PC-3 (cell line): ENCODE measurements at regions of chr15 and their contacts with region 1.

Region 1: DNA sequence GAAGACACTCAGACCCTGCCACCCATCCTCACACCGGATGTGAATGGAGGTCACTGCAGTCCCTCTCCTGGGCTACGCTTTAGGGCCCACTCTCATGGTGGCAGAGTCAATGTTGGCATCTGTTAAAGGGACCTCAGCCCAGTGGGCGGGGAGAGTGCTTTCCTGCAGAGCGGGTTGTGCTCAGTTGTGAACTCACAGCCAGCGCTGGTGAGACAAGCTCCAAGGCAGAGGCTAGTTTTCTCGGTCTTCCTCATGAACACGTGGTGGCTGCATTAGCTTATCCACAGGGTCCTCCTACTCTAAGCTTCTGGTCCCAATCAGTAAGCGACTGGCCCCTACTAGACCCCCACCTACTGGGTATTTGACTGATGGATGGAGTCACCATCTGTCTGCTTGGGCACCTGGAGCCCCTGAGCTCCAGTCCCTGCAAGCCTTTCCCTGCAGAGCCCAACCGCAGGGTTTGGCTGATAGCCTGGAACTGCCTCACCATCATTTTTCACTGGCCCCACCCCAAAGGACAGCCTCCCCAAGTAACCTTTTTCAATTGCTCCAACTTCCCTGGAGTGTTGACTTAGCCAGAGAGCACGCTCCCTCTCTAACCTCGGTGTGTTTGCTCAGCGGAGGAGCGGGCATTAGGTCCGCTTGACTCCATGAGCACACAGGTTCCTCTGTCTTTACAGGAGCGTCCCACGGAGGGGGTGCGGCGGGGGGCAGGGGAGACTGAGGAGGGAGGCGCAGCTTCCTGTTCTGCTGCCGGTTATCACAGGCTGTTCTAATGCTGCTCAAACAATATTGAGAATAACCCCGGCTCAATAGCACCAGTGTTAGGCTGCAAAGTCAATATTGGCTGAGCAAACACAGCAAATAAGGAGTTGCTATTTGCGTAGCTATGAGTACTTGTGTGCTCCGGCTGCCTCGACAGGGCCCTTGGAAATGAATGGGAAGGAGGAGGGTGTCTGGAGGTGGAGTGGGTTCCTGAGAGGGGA is 141.7 kb downstream of the RPLP1 start:
- DNase-seq: peak; percentile 98
- ATAC-seq: peak; percentile 79
- H3K4me3 ChIP-seq: peak overlapping the region; percentile 40; the same call in 1 of the 2 replicates
- H3K27ac ChIP-seq: peak overlapping the region; percentile 98
- H3K4me1 ChIP-seq: peaks cover 53% of the 10 kb centered on the region
- H3K27me3 ChIP-seq: no peaks in the 10 kb centered on the region
- CTCF ChIP-seq: no peak

Region 2: GRCh38 chr15:69475769-69476358 is 118.4 kb before region 1 on chr15:
- CTCF ChIA-PET with region 1: no interaction called
- POLR2A ChIA-PET with region 1: no interaction called
- intact Hi-C with region 1: loop called (anchors 5 kb)
- DNase-seq: peak; percentile 80
- ATAC-seq: peak; percentile 84
- H3K4me3 ChIP-seq: no peak overlapping the region
- H3K27ac ChIP-seq: no peak overlapping the region
- H3K4me1 ChIP-seq: peaks cover 10% of the 10 kb centered on the region
- H3K27me3 ChIP-seq: no peaks in the 10 kb centered on the region
- CTCF ChIP-seq: peak; percentile 79

Region 3: GRCh38 chr15:69576035-69576526 is 18.2 kb before region 1 on chr15:
- CTCF ChIA-PET with region 1: interaction called, 4 read pairs
- POLR2A ChIA-PET with region 1: interaction called, 20 read pairs
- intact Hi-C with region 1: loop called (anchors 1 kb)
- DNase-seq: peak; percentile 75
- ATAC-seq: peak; percentile 57
- H3K4me3 ChIP-seq: no peak overlapping the region
- H3K27ac ChIP-seq: peak overlapping the region; percentile 35; the same call in 1 of the 2 replicates
- H3K4me1 ChIP-seq: peaks cover 47% of the 10 kb centered on the region
- H3K27me3 ChIP-seq: no peaks in the 10 kb centered on the region
- CTCF ChIP-seq: peak; percentile 88

Region 4: DNA sequence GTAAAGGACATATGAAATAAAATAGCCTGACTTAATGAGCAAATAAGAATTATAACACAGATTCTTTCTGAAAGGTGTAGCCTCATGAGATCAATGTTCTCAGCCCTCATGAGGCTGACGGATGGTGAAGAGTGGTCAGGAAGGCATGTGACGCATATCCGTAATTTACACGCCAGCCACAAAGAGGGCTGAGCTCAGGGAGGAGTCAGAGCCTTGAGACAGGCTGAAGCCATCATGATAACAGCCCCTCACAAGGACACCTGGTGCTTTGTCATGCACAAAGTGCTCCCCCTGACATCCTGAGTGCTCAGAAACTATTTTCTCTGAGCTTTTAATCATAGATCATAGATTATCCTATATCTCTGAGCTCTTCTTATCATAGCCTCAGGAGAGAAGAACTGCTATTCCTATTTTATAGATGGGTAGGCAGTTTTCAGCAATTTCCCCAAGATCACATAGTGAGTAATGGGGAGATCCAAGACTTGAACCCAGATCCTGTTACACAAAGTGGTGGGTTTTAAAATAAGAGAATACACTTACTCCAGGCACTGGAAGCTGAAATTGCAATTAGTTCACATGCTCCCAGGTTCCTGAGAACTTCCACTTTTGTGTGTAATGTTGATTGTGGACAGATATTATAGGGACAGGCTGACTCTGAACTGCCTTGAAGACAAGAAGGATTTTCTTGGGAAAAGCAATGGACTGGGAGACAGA is 125.4 kb after region 1 on chr15:
- CTCF ChIA-PET with region 1: no interaction called
- POLR2A ChIA-PET with region 1: no interaction called
- intact Hi-C with region 1: loop called (anchors 2 kb)
- DNase-seq: no peak
- ATAC-seq: no peak
- H3K4me3 ChIP-seq: no peak overlapping the region
- H3K27ac ChIP-seq: no peak overlapping the region
- H3K4me1 ChIP-seq: peaks cover 10% of the 10 kb centered on the region
- H3K27me3 ChIP-seq: 0 out of 2 replicates have a peak, but pooled peaks cover 2% of the 10 kb centered on the region
- CTCF ChIP-seq: no peak

Region 5: GRCh38 chr15:69777356-69777755 is 183.1 kb after region 1 on chr15:
- CTCF ChIA-PET with region 1: no interaction called
- POLR2A ChIA-PET with region 1: no interaction called
- intact Hi-C with region 1: no loop called
- DNase-seq: no peak
- ATAC-seq: no peak
- H3K4me3 ChIP-seq: no peak overlapping the region
- H3K27ac ChIP-seq: no peak overlapping the region
- H3K4me1 ChIP-seq: 0 out of 2 replicates have a peak, but pooled peaks cover 6% of the 10 kb centered on the region
- H3K27me3 ChIP-seq: 0 out of 2 replicates have a peak, but pooled peaks cover 9% of the 10 kb centered on the region
- CTCF ChIP-seq: no peak

Region 6: GRCh38 chr15:70505411-70505919 is 911.2 kb after region 1 on chr15:
- CTCF ChIA-PET with region 1: no interaction called
- POLR2A ChIA-PET with region 1: no interaction called
- intact Hi-C with region 1: loop called (anchors 5 kb)
- DNase-seq: peak; percentile 95
- ATAC-seq: peak; percentile 56
- H3K4me3 ChIP-seq: no peak overlapping the region
- H3K27ac ChIP-seq: peak overlapping the region; percentile 90
- H3K4me1 ChIP-seq: peaks cover 57% of the 10 kb centered on the region
- H3K27me3 ChIP-seq: no peaks in the 10 kb centered on the region
- CTCF ChIP-seq: no peak